ENCODE measurements at regions of chr17 and their contacts with region 1.

Region 1: GRCh38 chr17:78341559-78342448 is 18.1 kb downstream of the SOCS3 start:
- DNase-seq: peak in 2 of 9 experiments; percentile 56 to 59
- ATAC-seq: no peak
- H3K4me3 ChIP-seq: peak overlapping the region in 1 of 2 experiments; percentile 37
- H3K4me3 Mint-ChIP-seq: peak overlapping the region; percentile 61
- H3K27ac ChIP-seq: no peak overlapping the region
- H3K27ac Mint-ChIP-seq: no peak overlapping the region
- H3K4me1 ChIP-seq: peaks cover 53% of the 10 kb centered on the region
- H3K4me1 Mint-ChIP-seq: peaks cover 61% of the 10 kb centered on the region
- H3K27me3 ChIP-seq: peaks cover 0 to 3% of the 10 kb centered on the region in 2 experiments
- H3K27me3 Mint-ChIP-seq: no peaks in the 10 kb centered on the region
- CTCF ChIP-seq: no peak

Region 2: GRCh38 chr17:78313735-78314648 is 27.8 kb before region 1 on chr17:
- CTCF ChIA-PET with region 1: interaction called, 10 read pairs
- POLR2A ChIA-PET with region 1: interaction called, 4 read pairs
- intact Hi-C with region 1: no loop called
- DNase-seq: peak; percentile 36 to 82 (median 73)
- ATAC-seq: peak; percentile 82
- H3K4me3 ChIP-seq: peak overlapping the region; percentile 18 to 57
- H3K4me3 Mint-ChIP-seq: peak overlapping the region; percentile 73
- H3K27ac ChIP-seq: no peak overlapping the region
- H3K27ac Mint-ChIP-seq: peak overlapping the region; percentile 64
- H3K4me1 ChIP-seq: peaks cover 39% of the 10 kb centered on the region
- H3K4me1 Mint-ChIP-seq: peaks cover 39% of the 10 kb centered on the region
- H3K27me3 ChIP-seq: peaks cover 0 to 2% of the 10 kb centered on the region in 2 experiments
- H3K27me3 Mint-ChIP-seq: no peaks in the 10 kb centered on the region
- CTCF ChIP-seq: no peak

Region 3: GRCh38 chr17:78442648-78443128 is 100.9 kb after region 1 on chr17:
- CTCF ChIA-PET with region 1: no interaction called
- POLR2A ChIA-PET with region 1: no interaction called
- intact Hi-C with region 1: no loop called
- DNase-seq: peak in 2 of 9 experiments; percentile 10 to 48
- ATAC-seq: no peak
- H3K4me3 ChIP-seq: no peak overlapping the region
- H3K4me3 Mint-ChIP-seq: no peak overlapping the region
- H3K27ac ChIP-seq: no peak overlapping the region
- H3K27ac Mint-ChIP-seq: no peak overlapping the region
- H3K4me1 ChIP-seq: no peaks in the 10 kb centered on the region
- H3K4me1 Mint-ChIP-seq: no peaks in the 10 kb centered on the region
- H3K27me3 ChIP-seq: no peaks in the 10 kb centered on the region
- H3K27me3 Mint-ChIP-seq: no peaks in the 10 kb centered on the region
- CTCF ChIP-seq: no peak

Region 4: DNA sequence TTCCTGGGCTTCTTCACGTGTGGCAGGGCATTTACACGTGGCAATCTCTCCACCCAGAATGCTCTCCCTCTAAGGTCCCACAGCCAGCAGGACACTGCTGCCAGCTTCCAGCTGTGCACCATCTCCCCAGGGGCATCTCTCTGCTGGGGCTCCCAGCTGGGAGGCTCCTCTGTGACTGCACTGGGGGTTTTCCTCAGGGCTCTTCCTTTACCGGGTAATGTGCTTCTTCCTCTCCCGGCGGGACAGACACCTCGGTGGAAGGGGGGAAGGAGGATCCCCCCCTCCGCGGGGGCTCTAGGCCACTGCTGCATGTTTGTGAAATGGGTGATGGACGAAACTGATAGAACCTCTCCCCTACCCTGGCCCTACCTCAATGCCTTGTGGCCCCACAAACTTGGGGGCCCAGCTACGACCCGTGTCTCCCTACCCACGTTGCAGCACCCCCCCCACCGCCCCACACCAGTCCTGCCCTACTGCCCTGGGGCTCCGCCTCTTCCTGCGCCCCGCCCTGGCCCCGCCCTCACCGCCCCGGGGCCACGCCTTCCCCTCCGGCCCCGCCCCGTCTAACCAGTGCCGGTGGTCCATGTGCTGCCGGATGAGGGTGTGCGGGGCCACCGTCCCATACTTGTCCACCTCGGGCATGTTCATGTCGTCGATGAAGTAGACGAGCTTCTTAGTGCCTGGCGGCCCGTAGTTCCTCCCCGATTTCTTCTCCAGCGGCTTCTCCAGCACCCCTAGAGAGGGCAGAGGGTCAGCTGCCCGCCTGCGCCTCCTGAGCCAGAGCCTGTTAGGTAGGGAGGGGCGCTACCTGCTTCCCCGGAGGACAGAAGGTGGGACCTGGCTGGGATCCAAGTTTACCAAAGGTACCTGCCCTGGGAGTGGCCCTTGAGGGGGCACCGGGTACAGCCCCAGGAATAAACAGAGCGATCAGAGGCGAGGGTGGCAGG is 142.8 kb after region 1 on chr17:
- CTCF ChIA-PET with region 1: no interaction called
- POLR2A ChIA-PET with region 1: no interaction called
- intact Hi-C with region 1: no loop called
- DNase-seq: peak; percentile 25 to 78 (median 58)
- ATAC-seq: peak; percentile 99
- H3K4me3 ChIP-seq: peak overlapping the region; percentile 26 to 52
- H3K4me3 Mint-ChIP-seq: peak overlapping the region; percentile 72
- H3K27ac ChIP-seq: no peak overlapping the region
- H3K27ac Mint-ChIP-seq: no peak overlapping the region
- H3K4me1 ChIP-seq: peaks cover 8% of the 10 kb centered on the region
- H3K4me1 Mint-ChIP-seq: peaks cover 10% of the 10 kb centered on the region
- H3K27me3 ChIP-seq: peaks cover 0 to 9% of the 10 kb centered on the region in 2 experiments
- H3K27me3 Mint-ChIP-seq: peaks cover 10% of the 10 kb centered on the region
- CTCF ChIP-seq: no peak

Region 5: GRCh38 chr17:78517421-78517820 is 175.6 kb after region 1 on chr17:
- CTCF ChIA-PET with region 1: no interaction called
- POLR2A ChIA-PET with region 1: no interaction called
- intact Hi-C with region 1: no loop called
- DNase-seq: no peak
- ATAC-seq: no peak
- H3K4me3 ChIP-seq: no peak overlapping the region
- H3K4me3 Mint-ChIP-seq: no peak overlapping the region
- H3K27ac ChIP-seq: no peak overlapping the region
- H3K27ac Mint-ChIP-seq: no peak overlapping the region
- H3K4me1 ChIP-seq: no peaks in the 10 kb centered on the region
- H3K4me1 Mint-ChIP-seq: no peaks in the 10 kb centered on the region
- H3K27me3 ChIP-seq: no peaks in the 10 kb centered on the region
- H3K27me3 Mint-ChIP-seq: no peaks in the 10 kb centered on the region
- CTCF ChIP-seq: no peak